Activated CD4-positive, alpha-beta T cell treated with anti-CD3 and anti-CD28 coated beads for 36 hours (primary cell): ENCODE measurements at regions of chr15 and their contacts with region 1.

Region 1: GRCh38 chr15:67839929-67840748 is at the start of gene RNU6-1:
- DNase-seq: peak; percentile 96
- ATAC-seq: peak; percentile 86
- H3K4me3 Mint-ChIP-seq: peak within 1 kb of the TSS; percentile 82
- H3K27ac Mint-ChIP-seq: peak within 1 kb of the TSS; percentile 97
- H3K4me1 Mint-ChIP-seq: peaks cover 23% of the 10 kb centered on the region
- H3K27me3 Mint-ChIP-seq: peaks cover 9% of the 10 kb centered on the region
- total RNA-seq, gene RNU6-1: not detected

Region 2: GRCh38 chr15:66946578-66947164 is 893.5 kb before region 1 on chr15:
- CTCF ChIA-PET with region 1: interaction called, 5 read pairs
- POLR2A ChIA-PET with region 1: no interaction called
- intact Hi-C with region 1: loop called (anchors 1 to 5 kb)
- DNase-seq: peak; percentile 85
- ATAC-seq: peak; percentile 70
- H3K4me3 Mint-ChIP-seq: no peak overlapping the region
- H3K27ac Mint-ChIP-seq: no peak overlapping the region
- H3K4me1 Mint-ChIP-seq: peaks cover 3% of the 10 kb centered on the region
- H3K27me3 Mint-ChIP-seq: no peaks in the 10 kb centered on the region

Region 3: DNA sequence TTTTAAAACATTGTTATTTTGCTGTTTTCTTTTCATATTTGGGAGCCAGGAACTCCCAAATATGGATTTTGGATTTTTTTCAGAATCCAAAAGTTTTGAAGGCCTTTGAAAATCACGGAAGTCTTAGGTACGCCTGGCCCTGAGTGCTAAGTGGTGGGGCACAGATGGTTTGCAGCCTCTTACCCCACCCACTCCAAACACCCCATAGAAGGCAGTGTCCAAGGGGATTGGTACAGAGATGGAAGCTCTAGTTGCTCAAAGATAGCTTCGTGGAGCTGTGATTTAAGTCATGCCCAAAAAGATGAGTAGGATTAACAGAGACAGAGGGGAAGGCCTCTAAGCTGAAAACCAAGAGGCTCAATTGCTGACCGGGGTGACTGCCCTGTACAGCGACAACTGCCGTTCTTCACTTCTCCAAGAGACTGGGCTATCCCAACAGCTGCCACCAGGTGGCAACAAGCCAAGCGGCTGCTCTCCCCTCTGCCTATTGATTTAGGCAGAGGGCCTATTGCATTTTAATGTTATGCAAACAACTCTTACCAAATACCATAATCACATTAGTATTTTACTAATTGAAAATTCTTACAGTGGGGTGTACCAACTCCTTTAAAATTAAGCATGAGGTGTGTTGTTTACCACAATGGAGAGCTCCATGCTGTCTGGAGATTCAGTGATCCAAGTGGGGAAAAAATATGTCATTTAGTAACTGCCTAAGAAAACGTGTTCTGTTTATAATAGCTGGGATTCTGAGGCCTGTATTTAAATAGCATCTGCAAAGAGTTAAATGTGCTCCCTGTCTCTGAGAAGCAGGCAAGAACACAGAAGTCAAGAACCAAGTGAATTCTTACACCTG is 383.2 kb before region 1 on chr15:
- CTCF ChIA-PET with region 1: interaction called, 37 read pairs
- POLR2A ChIA-PET with region 1: no interaction called
- intact Hi-C with region 1: loop called (anchors 1 kb)
- DNase-seq: peak; percentile 92
- ATAC-seq: peak; percentile 86
- H3K4me3 Mint-ChIP-seq: no peak overlapping the region
- H3K27ac Mint-ChIP-seq: no peak overlapping the region
- H3K4me1 Mint-ChIP-seq: no peaks in the 10 kb centered on the region
- H3K27me3 Mint-ChIP-seq: peaks cover 2% of the 10 kb centered on the region

Region 4: GRCh38 chr15:67670647-67671305 is 169.4 kb before region 1 on chr15:
- CTCF ChIA-PET with region 1: no interaction called
- POLR2A ChIA-PET with region 1: no interaction called
- intact Hi-C with region 1: no loop called
- DNase-seq: no peak
- ATAC-seq: no peak
- H3K4me3 Mint-ChIP-seq: no peak overlapping the region
- H3K27ac Mint-ChIP-seq: no peak overlapping the region
- H3K4me1 Mint-ChIP-seq: no peaks in the 10 kb centered on the region
- H3K27me3 Mint-ChIP-seq: no peaks in the 10 kb centered on the region

Region 5: DNA sequence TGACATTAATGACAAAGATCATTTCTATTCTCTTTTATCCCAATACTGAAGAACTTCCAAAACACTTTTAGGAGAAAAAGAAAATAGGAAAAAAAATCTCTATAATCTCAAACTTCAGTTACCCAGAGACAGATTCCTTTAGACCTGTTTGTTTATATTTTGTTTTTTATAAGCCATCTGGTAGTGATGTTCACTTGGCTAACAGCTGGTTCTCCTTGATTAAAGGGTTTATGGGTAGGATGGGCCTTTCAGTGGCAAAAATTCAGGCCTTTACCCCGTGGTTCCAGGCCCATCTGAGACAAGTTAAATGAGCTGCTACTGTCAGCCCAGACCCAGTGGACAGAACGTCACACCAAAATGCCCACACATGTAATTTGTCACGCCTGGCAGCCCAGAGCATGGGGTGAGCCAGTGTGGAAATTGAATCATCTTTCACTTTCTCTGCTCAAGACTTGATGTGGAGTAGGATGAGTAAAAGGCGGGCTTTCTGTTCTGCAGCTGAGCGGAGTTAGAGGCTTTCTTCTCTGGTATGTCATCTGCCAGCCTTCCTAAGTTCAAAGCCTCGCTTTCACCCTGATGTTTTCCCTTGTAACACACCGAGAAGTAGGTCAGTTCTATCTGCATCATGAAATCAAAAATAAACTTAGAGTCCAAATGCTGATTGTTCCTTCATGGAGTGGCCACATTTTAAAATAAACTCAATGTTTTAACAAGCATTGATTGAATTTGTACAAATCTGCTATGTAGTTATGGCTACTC is 77.3 kb before region 1 on chr15:
- CTCF ChIA-PET with region 1: interaction called, 3 read pairs
- POLR2A ChIA-PET with region 1: no interaction called
- intact Hi-C with region 1: loop called in 1 of 2 experiments (anchors 2 kb)
- DNase-seq: peak; percentile 81
- ATAC-seq: peak; percentile 99
- H3K4me3 Mint-ChIP-seq: no peak overlapping the region
- H3K27ac Mint-ChIP-seq: peak overlapping the region; percentile 79
- H3K4me1 Mint-ChIP-seq: peaks cover 76% of the 10 kb centered on the region
- H3K27me3 Mint-ChIP-seq: no peaks in the 10 kb centered on the region

Region 6: GRCh38 chr15:68229386-68230156 is 389.4 kb after region 1 on chr15 and contains the start of gene CLN6:
- CTCF ChIA-PET with region 1: no interaction called
- POLR2A ChIA-PET with region 1: no interaction called
- intact Hi-C with region 1: loop called in 1 of 2 experiments (anchors 1 kb)
- DNase-seq: peak; percentile 88
- ATAC-seq: peak; percentile 88
- H3K4me3 Mint-ChIP-seq: peak within 1 kb of the TSS; percentile 99
- H3K27ac Mint-ChIP-seq: peak within 1 kb of the TSS; percentile 95
- H3K4me1 Mint-ChIP-seq: peaks cover 47% of the 10 kb centered on the region
- H3K27me3 Mint-ChIP-seq: no peaks in the 10 kb centered on the region
- total RNA-seq, gene CLN6: 45.1 to 48.2 TPM